HepG2 (cell line): ENCODE measurements at regions of chr9 and their contacts with region 1.

Region 1: DNA sequence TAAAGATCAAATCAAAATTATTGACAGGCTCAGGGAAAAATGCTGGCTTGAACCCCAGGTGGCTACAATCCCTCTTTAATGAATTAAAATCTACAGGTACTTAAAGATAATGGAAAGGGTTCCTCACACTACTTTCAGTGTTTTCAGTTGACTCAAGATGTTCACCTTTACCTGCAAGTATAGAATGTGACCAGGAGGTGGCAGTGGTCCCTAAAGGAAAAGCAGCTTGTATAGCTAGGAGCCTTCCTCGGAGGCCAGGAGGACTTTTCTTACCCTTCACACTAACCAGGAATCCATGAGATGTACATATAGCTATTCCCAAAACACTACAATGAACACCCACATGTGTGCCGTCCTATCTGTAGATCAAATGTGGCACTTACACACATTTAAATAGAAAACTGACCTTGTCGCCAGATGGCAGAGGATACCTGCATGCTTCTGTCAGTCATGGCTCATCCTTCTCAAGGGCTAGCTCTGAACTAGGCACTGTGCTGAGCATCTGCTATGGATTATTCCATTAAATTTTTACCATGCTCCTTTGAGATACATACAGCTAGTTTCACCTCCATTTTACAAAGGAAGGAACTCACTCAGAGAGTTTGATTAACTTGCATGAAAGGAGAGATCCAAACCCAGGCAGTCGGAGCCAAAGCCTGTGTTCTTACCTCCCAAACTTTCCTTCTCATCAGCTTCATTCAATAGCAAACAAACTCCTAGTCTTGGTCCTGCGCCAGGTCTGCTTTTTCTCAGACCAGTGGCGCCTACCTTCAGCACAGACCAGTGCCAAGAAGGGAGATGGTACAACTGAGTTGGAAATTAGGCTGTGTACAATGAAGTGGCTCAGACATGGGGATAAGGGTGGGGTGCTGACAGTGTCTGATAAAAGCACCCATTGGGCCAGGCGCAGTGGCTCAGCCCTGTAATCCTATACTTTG is 24.5 kb downstream of the C9orf152 start:
- DNase-seq: peak; percentile 78
- ATAC-seq: peak; percentile 67
- H3K4me3 ChIP-seq: no peak overlapping the region
- H3K27ac ChIP-seq: no peak overlapping the region
- H3K4me1 ChIP-seq: peaks cover 75% of the 10 kb centered on the region
- H3K27me3 ChIP-seq: no peaks in the 10 kb centered on the region
- CTCF ChIP-seq: peak; percentile 91
- EP300 ChIP-seq: no peak
- POLR2A ChIP-seq: no peak
- RAD21 ChIP-seq: peak; percentile 93

Region 2: GRCh38 chr9:110320651-110321445 is 137.4 kb after region 1 on chr9:
- CTCF ChIA-PET with region 1: no interaction called
- POLR2A ChIA-PET with region 1: no interaction called
- in situ Hi-C with region 1: no loop called
- intact Hi-C with region 1: no loop called
- DNase-seq: no peak
- ATAC-seq: no peak
- H3K4me3 ChIP-seq: no peak overlapping the region
- H3K27ac ChIP-seq: no peak overlapping the region
- H3K4me1 ChIP-seq: no peaks in the 10 kb centered on the region
- H3K27me3 ChIP-seq: no peaks in the 10 kb centered on the region
- CTCF ChIP-seq: no peak
- EP300 ChIP-seq: no peak
- POLR2A ChIP-seq: no peak
- RAD21 ChIP-seq: no peak

Region 3: GRCh38 chr9:110340314-110340713 is 156.8 kb after region 1 on chr9:
- CTCF ChIA-PET with region 1: no interaction called
- POLR2A ChIA-PET with region 1: no interaction called
- in situ Hi-C with region 1: no loop called
- intact Hi-C with region 1: loop called (anchors 1 kb)
- DNase-seq: peak; percentile 14
- ATAC-seq: peak; percentile 88
- H3K4me3 ChIP-seq: no peak overlapping the region
- H3K27ac ChIP-seq: no peak overlapping the region
- H3K4me1 ChIP-seq: no peaks in the 10 kb centered on the region
- H3K27me3 ChIP-seq: no peaks in the 10 kb centered on the region
- CTCF ChIP-seq: peak; percentile 56
- EP300 ChIP-seq: no peak
- POLR2A ChIP-seq: no peak
- RAD21 ChIP-seq: no peak

Region 4: GRCh38 chr9:110427497-110428104 is 244.1 kb after region 1 on chr9:
- CTCF ChIA-PET with region 1: interaction called, 5 read pairs
- POLR2A ChIA-PET with region 1: interaction called, 3 read pairs
- in situ Hi-C with region 1: loop called (anchors 5 kb)
- intact Hi-C with region 1: loop called (anchors 2 kb)
- DNase-seq: peak; percentile 18
- ATAC-seq: peak; percentile 83
- H3K4me3 ChIP-seq: no peak overlapping the region
- H3K27ac ChIP-seq: no peak overlapping the region
- H3K4me1 ChIP-seq: no peaks in the 10 kb centered on the region
- H3K27me3 ChIP-seq: no peaks in the 10 kb centered on the region
- CTCF ChIP-seq: peak; percentile 68
- EP300 ChIP-seq: no peak
- POLR2A ChIP-seq: no peak
- RAD21 ChIP-seq: no peak

Region 5: GRCh38 chr9:110615498-110615897 is 432.0 kb after region 1 on chr9:
- CTCF ChIA-PET with region 1: no interaction called
- POLR2A ChIA-PET with region 1: no interaction called
- in situ Hi-C with region 1: loop called (anchors 5 kb)
- intact Hi-C with region 1: loop called (anchors 2 kb)
- DNase-seq: no peak
- ATAC-seq: no peak
- H3K4me3 ChIP-seq: no peak overlapping the region
- H3K27ac ChIP-seq: no peak overlapping the region
- H3K4me1 ChIP-seq: no peaks in the 10 kb centered on the region
- H3K27me3 ChIP-seq: no peaks in the 10 kb centered on the region; a peak in 1 of 5 replicates
- CTCF ChIP-seq: no peak
- EP300 ChIP-seq: no peak
- POLR2A ChIP-seq: no peak
- RAD21 ChIP-seq: no peak